CD4-positive, alpha-beta T cell (primary cell): ENCODE measurements at regions of chr12 and their contacts with region 1.

Region 1: GRCh38 chr12:7989827-7990551 is 42.5 kb upstream of the FOXJ2 start:
- DNase-seq: peak; percentile 25 to 85 (median 63)
- ATAC-seq: peak; percentile 86
- H3K4me3 ChIP-seq: peak overlapping the region; percentile 19
- H3K4me3 Mint-ChIP-seq: peak overlapping the region; percentile 73
- H3K27ac ChIP-seq: peak overlapping the region; percentile 40 to 67
- H3K27ac Mint-ChIP-seq: peak overlapping the region; percentile 78
- H3K4me1 ChIP-seq: peaks cover 43% of the 10 kb centered on the region
- H3K4me1 Mint-ChIP-seq: peaks cover 20% of the 10 kb centered on the region
- H3K27me3 ChIP-seq: no peaks in the 10 kb centered on the region
- H3K27me3 Mint-ChIP-seq: no peaks in the 10 kb centered on the region
- CTCF ChIP-seq: no peak

Region 2: GRCh38 chr12:6500466-6500865 is 1489.5 kb before region 1 on chr12:
- CTCF ChIA-PET with region 1: no interaction called
- POLR2A ChIA-PET with region 1: no interaction called
- intact Hi-C with region 1: no loop called
- DNase-seq: no peak
- ATAC-seq: no peak
- H3K4me3 ChIP-seq: no peak overlapping the region
- H3K4me3 Mint-ChIP-seq: no peak overlapping the region
- H3K27ac ChIP-seq: no peak overlapping the region
- H3K27ac Mint-ChIP-seq: no peak overlapping the region
- H3K4me1 ChIP-seq: peaks cover 13% of the 10 kb centered on the region
- H3K4me1 Mint-ChIP-seq: peaks cover 15% of the 10 kb centered on the region
- H3K27me3 ChIP-seq: no peaks in the 10 kb centered on the region
- H3K27me3 Mint-ChIP-seq: no peaks in the 10 kb centered on the region
- CTCF ChIP-seq: no peak

Region 3: DNA sequence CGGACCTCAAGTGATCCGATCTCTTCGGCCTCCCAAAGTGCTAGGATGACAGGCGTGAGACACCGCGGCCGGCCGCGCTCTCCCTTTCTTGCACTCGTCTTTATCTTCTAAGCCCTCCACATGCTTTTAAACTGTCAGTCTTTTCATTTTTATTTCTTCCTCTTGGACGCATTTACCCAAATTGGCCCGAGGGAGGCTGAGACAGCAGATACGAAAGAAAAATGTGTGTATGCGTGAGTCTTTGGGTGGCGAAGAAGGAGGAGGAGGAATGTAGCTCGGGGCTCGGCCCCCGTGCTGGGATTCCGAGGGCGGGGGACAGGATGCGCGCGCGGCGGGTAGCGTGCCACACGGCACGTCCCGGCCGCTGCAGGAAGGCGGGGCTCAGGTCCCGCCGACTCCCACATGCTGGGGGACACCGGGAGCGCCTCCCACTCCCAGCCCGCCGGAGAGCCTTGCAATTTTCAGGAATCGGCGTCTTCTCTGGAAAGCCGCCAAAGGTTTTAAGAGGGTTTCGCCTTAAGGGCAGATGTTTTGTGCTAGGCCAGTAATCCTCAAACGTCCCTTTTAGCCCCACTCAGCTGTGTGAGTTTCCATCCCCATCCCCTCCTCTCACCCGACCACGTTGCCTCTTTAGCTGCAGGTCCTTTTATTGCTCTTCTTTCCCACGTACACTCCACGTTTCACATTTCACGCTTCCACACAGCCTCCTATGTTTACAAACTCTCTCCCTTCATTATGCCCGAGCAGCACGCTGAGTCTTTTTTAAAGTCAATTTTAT is 19.3 kb before region 1 on chr12:
- CTCF ChIA-PET with region 1: interaction called, 12 read pairs
- POLR2A ChIA-PET with region 1: interaction called, 9 read pairs
- intact Hi-C with region 1: loop called (anchors 1 to 2 kb)
- DNase-seq: peak; percentile 69 to 95 (median 80)
- ATAC-seq: peak; percentile 83
- H3K4me3 ChIP-seq: peak overlapping the region; percentile 68
- H3K4me3 Mint-ChIP-seq: peak overlapping the region; percentile 88
- H3K27ac ChIP-seq: peak overlapping the region; percentile 76 to 87
- H3K27ac Mint-ChIP-seq: peak overlapping the region; percentile 94
- H3K4me1 ChIP-seq: peaks cover 25% of the 10 kb centered on the region
- H3K4me1 Mint-ChIP-seq: peaks cover 30% of the 10 kb centered on the region
- H3K27me3 ChIP-seq: no peaks in the 10 kb centered on the region
- H3K27me3 Mint-ChIP-seq: no peaks in the 10 kb centered on the region
- CTCF ChIP-seq: no peak